ENCODE measurements at regions of chr16 and their contacts with region 1.

Region 1: GRCh38 chr16:50665128-50665878 is 15.8 kb downstream of the SNX20 start:
- DNase-seq: peak; percentile 89
- H3K4me3 Mint-ChIP-seq: peak overlapping the region; percentile 57
- H3K27ac Mint-ChIP-seq: peak overlapping the region; percentile 72
- H3K4me1 Mint-ChIP-seq: peaks cover 29% of the 10 kb centered on the region
- H3K27me3 Mint-ChIP-seq: no peaks in the 10 kb centered on the region

Region 2: GRCh38 chr16:50210266-50211038 is 454.9 kb before region 1 on chr16:
- CTCF ChIA-PET with region 1: interaction called, 4 read pairs
- intact Hi-C with region 1: loop called (anchors 1 kb)
- DNase-seq: peak; percentile 88
- H3K4me3 Mint-ChIP-seq: no peak overlapping the region
- H3K27ac Mint-ChIP-seq: peak overlapping the region; percentile 59
- H3K4me1 Mint-ChIP-seq: peaks cover 32% of the 10 kb centered on the region
- H3K27me3 Mint-ChIP-seq: no peaks in the 10 kb centered on the region

Region 3: GRCh38 chr16:50354629-50355456 is 310.5 kb before region 1 on chr16:
- CTCF ChIA-PET with region 1: interaction called, 18 read pairs
- intact Hi-C with region 1: no loop called
- DNase-seq: no peak
- H3K4me3 Mint-ChIP-seq: no peak overlapping the region
- H3K27ac Mint-ChIP-seq: no peak overlapping the region
- H3K4me1 Mint-ChIP-seq: peaks cover 25% of the 10 kb centered on the region
- H3K27me3 Mint-ChIP-seq: no peaks in the 10 kb centered on the region

Region 4: GRCh38 chr16:50377001-50377400 is 288.3 kb before region 1 on chr16:
- CTCF ChIA-PET with region 1: interaction called, 46 read pairs
- intact Hi-C with region 1: no loop called
- DNase-seq: no peak
- H3K4me3 Mint-ChIP-seq: no peak overlapping the region
- H3K27ac Mint-ChIP-seq: no peak overlapping the region
- H3K4me1 Mint-ChIP-seq: peaks cover 3% of the 10 kb centered on the region
- H3K27me3 Mint-ChIP-seq: no peaks in the 10 kb centered on the region

Region 5: GRCh38 chr16:50464325-50465290 is 200.7 kb before region 1 on chr16:
- CTCF ChIA-PET with region 1: no interaction called
- intact Hi-C with region 1: no loop called
- DNase-seq: no peak
- H3K4me3 Mint-ChIP-seq: no peak overlapping the region
- H3K27ac Mint-ChIP-seq: no peak overlapping the region
- H3K4me1 Mint-ChIP-seq: peaks cover 4% of the 10 kb centered on the region
- H3K27me3 Mint-ChIP-seq: peaks cover 12% of the 10 kb centered on the region

Region 6: GRCh38 chr16:50681021-50681885 is 15.9 kb after region 1 on chr16 and contains the start of gene SNX20:
- CTCF ChIA-PET with region 1: interaction called, 251 read pairs
- intact Hi-C with region 1: loop called (anchors 2 kb)
- DNase-seq: peak; percentile 78
- H3K4me3 Mint-ChIP-seq: peak within 1 kb of the TSS; percentile 83
- H3K27ac Mint-ChIP-seq: peak within 1 kb of the TSS; percentile 93
- H3K4me1 Mint-ChIP-seq: peaks cover 81% of the 10 kb centered on the region
- H3K27me3 Mint-ChIP-seq: no peaks in the 10 kb centered on the region
- total RNA-seq, gene SNX20: 29.6 to 30.3 TPM

Region 7: GRCh38 chr16:50747207-50747956 is 82.1 kb after region 1 on chr16:
- CTCF ChIA-PET with region 1: interaction called, 532 read pairs
- intact Hi-C with region 1: loop called (anchors 1 kb)
- DNase-seq: peak; percentile 27
- H3K4me3 Mint-ChIP-seq: peak overlapping the region; percentile 67
- H3K27ac Mint-ChIP-seq: peak overlapping the region; percentile 93
- H3K4me1 Mint-ChIP-seq: peaks cover 62% of the 10 kb centered on the region
- H3K27me3 Mint-ChIP-seq: no peaks in the 10 kb centered on the region

Measured in activated naive CD4-positive, alpha-beta T cell treated with anti-CD3 and anti-CD28 coated beads for 36 hours (primary cell).